Activated T-helper 2 cell treated with anti-CD3 and anti-CD28 coated beads, Interferon-gamma antibody, Interleukin-2, Interleukin-4, amounts not matched to agents 10 μg/mL and 5 μg/mL and 100 μg/mL, durations not matched to agents 14 hours and 24 hours and 36 hours (primary cell): ENCODE measurements at regions of chr9 and their contacts with region 1.

Region 1: DNA sequence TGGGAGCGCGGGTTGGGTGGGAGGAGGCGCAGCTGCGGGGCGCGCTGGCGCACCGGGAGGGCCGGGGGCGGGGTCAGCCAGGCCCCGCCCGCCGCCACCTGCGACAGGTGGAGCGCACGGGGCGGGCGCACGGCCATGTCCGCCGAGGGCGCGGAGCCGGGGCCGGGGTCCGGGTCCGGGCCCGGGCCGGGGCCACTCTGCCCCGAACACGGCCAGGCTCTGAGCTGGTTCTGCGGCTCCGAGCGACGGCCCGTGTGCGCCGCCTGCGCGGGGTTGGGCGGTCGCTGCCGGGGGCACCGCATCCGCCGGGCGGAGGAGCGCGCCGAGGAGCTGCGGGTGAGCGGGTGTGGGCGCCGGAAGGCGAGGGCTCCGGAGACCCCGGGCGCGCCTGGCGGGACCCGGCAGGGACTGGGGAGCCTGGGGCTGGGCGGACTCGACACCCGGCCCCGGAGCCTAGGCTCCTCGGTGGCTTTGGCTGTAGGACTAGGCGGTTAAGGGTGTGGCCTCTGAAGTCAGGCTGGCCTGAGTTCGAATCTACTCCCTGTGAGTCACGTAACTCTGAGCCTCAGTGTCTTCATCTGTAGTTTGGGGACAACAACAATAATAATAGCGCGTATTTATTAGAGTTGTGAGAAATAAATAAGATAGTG is at the start of gene BSPRY:
- DNase-seq: peak; percentile 43
- H3K4me3 Mint-ChIP-seq: peak within 1 kb of the TSS; percentile 88
- H3K27ac Mint-ChIP-seq: peak within 1 kb of the TSS; percentile 97
- H3K4me1 Mint-ChIP-seq: peaks cover 44% of the 10 kb centered on the region
- H3K27me3 Mint-ChIP-seq: no peaks in the 10 kb centered on the region
- total RNA-seq, gene BSPRY: 11.1 and 12.5 TPM in 2 replicates

Region 2: GRCh38 chr9:113042884-113043657 is 306.5 kb before region 1 on chr9:
- intact Hi-C with region 1: no loop called
- DNase-seq: no peak
- H3K4me3 Mint-ChIP-seq: no peak overlapping the region
- H3K27ac Mint-ChIP-seq: no peak overlapping the region
- H3K4me1 Mint-ChIP-seq: no peaks in the 10 kb centered on the region
- H3K27me3 Mint-ChIP-seq: no peaks in the 10 kb centered on the region

Region 3: DNA sequence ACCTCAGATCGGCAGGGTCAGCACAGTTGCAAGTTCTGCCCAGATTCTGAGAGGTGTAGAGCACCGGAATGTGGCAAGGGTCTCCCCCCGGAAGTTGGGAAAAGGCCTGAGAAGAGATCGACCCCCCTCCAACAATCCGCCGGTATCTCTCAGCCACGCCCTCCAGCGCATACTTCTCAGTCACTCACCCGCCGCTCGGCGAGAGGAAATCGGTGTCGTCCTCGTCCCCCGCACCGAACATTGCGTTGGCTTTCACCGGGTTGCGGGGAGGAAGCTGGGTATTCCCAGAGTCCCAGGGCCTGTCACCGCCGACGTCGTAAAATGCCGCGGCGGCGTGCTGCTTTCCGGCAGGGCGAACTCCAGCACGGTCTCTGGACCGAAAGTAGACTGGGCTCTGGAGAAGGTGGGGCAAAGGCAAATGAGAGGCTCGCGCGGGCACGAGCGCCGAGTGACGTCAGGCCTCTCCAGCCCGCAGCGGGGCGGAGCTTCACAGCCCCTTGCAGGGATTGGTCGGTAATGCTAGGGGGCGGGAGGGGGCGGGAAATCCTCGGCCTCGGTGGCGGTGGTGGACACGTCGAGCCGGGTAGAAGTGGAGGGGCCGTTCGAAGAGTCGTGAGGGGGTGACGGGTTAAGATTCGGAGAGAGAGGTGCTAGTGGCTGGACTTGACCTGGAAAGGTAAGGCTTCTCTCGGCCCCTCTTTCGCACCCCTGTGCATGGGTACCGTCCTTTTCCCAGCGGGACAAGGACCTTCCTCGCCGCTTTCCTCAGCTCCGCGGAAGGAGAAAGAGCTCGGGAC is 128.4 kb before region 1 on chr9 and contains the starts of genes FKBP15 and SLC31A1:
- intact Hi-C with region 1: loop called (anchors 5 kb)
- DNase-seq: peak; percentile 94
- H3K4me3 Mint-ChIP-seq: peak within 1 kb of the TSS; percentile 92
- H3K27ac Mint-ChIP-seq: peak within 1 kb of the TSS; percentile 78
- H3K4me1 Mint-ChIP-seq: peaks cover 41% of the 10 kb centered on the region
- H3K27me3 Mint-ChIP-seq: no peaks in the 10 kb centered on the region
- total RNA-seq, gene FKBP15: 39.6 and 40.4 TPM in 2 replicates
- total RNA-seq, gene SLC31A1: 18.0 and 20.0 TPM in 2 replicates

Region 4: DNA sequence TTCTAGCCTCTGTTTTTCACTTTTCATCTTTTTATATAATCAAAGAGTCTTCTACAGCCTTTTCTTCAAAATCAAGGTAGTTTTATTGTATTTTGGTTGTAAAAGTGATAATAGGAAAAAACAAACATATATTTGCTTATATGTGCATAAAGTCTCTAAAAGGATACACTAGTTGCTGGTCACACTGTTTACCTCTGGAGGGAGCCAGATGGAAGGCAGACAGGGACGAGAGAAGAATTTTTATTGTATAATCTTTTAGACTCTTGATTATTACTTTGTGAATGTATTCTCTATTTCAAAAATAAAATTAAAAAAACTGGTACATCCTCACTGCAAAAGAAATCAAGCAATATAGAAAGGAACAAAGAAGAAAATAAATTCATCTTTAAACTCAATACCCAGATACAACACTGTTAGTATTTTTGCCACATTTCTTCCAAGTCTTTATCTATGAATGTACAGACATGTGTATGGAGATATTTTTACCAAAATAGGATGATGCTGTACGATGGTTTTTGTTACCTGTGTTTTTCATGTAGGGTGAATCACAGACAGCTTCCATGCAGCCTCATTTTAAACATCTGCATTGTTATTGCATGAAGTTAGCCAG is 40.3 kb before region 1 on chr9:
- intact Hi-C with region 1: loop called (anchors 2 kb)
- DNase-seq: no peak
- H3K4me3 Mint-ChIP-seq: no peak overlapping the region
- H3K27ac Mint-ChIP-seq: no peak overlapping the region
- H3K4me1 Mint-ChIP-seq: peaks cover 12% of the 10 kb centered on the region
- H3K27me3 Mint-ChIP-seq: peaks cover 3% of the 10 kb centered on the region

Region 5: DNA sequence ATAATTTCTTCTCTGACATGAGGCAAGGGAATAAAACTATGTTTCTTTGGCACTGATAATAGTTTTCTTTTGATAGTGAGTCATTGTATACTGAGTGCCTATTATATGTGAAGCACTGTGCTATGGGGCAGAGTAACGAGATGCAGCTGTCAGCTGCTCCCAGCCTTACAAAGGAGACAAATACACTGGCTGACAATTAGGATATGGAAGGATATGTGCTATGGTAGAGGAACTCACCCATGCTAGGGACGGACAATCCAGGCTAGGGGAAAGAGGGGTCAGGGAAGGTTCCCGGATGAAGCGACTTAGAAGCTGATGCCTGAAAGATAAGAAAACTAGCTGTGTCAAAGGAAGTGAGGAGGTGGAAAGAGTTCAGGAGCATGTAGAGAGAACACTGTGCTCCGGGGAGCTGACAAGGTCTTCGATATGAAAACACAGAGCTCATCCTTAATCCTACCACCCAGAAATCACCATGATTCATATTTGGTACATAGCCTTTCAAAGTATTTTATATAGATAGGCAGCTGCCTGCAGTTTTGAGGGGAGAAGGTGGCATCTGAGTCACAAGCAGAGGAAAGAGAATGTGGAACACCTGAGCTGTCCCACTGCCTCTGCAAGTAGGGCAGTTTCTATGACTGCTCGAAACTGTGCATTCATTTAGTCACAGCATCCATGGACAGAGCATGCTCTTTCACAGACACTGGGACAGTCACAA is 11.9 kb after region 1 on chr9:
- intact Hi-C with region 1: loop called (anchors 1 kb)
- DNase-seq: no peak
- H3K4me3 Mint-ChIP-seq: no peak overlapping the region
- H3K27ac Mint-ChIP-seq: peak overlapping the region; percentile 26
- H3K4me1 Mint-ChIP-seq: peaks cover 14% of the 10 kb centered on the region
- H3K27me3 Mint-ChIP-seq: no peaks in the 10 kb centered on the region

Region 6: DNA sequence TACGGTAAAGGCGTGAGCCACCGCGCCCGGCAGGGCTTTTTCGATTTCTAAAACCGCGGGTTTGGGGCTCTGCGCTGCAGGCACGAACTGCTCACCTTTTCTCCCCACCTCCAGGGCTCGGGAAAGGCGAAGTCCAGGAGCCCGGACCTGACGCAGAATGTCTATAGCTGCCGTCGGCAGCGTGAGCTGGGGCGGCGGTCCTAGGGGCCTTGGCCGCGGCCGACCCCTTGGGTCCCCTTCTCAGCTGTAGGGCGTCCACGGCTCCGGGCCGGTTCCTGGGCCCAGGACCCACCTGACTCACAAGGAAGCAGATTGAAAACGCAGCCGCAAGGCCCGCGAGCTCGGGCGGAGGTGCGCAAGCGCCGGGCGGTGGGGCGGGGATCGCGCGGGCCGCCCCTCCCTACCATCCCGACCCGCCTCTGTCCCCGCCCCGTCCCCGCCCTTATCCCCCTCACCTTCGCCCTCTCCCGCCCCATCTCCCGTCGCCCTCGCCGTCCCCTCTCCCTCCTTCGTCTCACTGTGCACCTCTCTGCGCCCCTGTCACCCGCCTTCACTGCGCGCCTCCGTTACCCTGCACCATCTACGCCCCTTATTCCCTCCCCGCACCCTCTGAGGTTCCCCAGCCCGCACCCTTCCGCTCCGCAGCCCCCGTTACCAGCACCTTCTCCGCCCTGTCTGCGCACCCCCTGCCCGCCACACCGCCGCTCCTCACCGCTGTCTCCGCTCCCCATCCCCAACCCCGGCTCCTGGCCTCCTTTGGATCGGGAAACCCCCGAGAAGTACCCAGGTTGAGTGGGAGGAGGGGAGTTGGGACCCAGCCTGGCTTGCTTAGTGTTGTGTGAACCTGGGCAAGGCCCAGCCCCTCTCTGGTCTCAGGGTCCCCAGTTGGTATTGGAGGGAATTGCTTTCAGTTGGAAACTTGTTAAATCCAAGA is 27.3 kb after region 1 on chr9 and contains the start of gene HDHD3:
- intact Hi-C with region 1: loop called (anchors 2 kb)
- DNase-seq: peak; percentile 78
- H3K4me3 Mint-ChIP-seq: peak within 1 kb of the TSS; percentile 85
- H3K27ac Mint-ChIP-seq: peak within 1 kb of the TSS; percentile 65
- H3K4me1 Mint-ChIP-seq: peaks cover 9% of the 10 kb centered on the region
- H3K27me3 Mint-ChIP-seq: no peaks in the 10 kb centered on the region
- total RNA-seq, gene HDHD3: 18.7 and 18.8 TPM in 2 replicates